Calu3 (cell line): ENCODE measurements at regions of chr2 and their contacts with region 1.

Region 1: GRCh38 chr2:212548450-212548819 is 9.8 kb upstream of the ERBB4 start:
- DNase-seq: peak; percentile 39
- H3K4me3 Mint-ChIP-seq: no peak overlapping the region
- H3K27ac Mint-ChIP-seq: no peak overlapping the region
- H3K4me1 Mint-ChIP-seq: no peaks in the 10 kb centered on the region
- H3K27me3 Mint-ChIP-seq: no peaks in the 10 kb centered on the region
- CTCF ChIP-seq: peak; percentile 37

Region 2: GRCh38 chr2:212147921-212148513 is 400.4 kb before region 1 on chr2:
- CTCF ChIA-PET with region 1: no interaction called
- intact Hi-C with region 1: loop called (anchors 1 kb)
- DNase-seq: peak; percentile 20
- H3K4me3 Mint-ChIP-seq: no peak overlapping the region
- H3K27ac Mint-ChIP-seq: no peak overlapping the region
- H3K4me1 Mint-ChIP-seq: peaks cover 11% of the 10 kb centered on the region
- H3K27me3 Mint-ChIP-seq: no peaks in the 10 kb centered on the region
- CTCF ChIP-seq: peak; percentile 33

Region 3: DNA sequence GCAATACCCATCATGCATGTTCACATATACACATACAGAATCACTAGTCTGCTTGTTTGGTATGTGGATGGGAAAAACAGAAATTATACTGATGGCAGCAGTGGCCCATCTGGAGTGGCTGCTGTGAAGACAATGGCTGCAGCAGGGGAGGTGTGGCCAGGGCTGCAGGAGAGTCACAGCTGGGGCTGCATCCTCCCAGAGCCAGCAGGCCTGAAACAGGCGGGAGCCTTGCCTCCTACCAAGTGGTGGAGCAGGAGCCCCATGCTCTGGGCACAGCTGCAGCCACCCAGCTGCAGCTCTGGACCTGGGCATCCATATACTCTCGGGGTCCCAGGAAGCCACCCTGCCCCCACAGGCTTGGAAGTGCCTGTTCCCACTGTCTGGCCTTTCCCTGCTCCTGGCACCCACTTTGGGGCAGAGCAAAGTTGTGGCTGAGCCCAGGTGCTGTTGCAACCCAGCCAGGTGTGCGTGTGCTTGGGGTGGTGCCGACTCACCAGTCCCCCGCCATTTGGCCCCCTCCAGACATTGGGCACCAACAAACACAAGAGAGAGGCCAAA is 872.5 kb after region 1 on chr2:
- CTCF ChIA-PET with region 1: no interaction called
- intact Hi-C with region 1: no loop called
- DNase-seq: no peak
- H3K4me3 Mint-ChIP-seq: no peak overlapping the region
- H3K27ac Mint-ChIP-seq: no peak overlapping the region
- H3K4me1 Mint-ChIP-seq: no peaks in the 10 kb centered on the region
- H3K27me3 Mint-ChIP-seq: no peaks in the 10 kb centered on the region
- CTCF ChIP-seq: no peak